ENCODE measurements at regions of chr9 and their contacts with region 1.

Region 1: GRCh38 chr9:112793213-112793810 is 42.8 kb downstream of the SNX30 start:
- DNase-seq: no peak
- H3K4me3 ChIP-seq: no peak overlapping the region
- CTCF ChIP-seq: peak; percentile 78

Region 2: DNA sequence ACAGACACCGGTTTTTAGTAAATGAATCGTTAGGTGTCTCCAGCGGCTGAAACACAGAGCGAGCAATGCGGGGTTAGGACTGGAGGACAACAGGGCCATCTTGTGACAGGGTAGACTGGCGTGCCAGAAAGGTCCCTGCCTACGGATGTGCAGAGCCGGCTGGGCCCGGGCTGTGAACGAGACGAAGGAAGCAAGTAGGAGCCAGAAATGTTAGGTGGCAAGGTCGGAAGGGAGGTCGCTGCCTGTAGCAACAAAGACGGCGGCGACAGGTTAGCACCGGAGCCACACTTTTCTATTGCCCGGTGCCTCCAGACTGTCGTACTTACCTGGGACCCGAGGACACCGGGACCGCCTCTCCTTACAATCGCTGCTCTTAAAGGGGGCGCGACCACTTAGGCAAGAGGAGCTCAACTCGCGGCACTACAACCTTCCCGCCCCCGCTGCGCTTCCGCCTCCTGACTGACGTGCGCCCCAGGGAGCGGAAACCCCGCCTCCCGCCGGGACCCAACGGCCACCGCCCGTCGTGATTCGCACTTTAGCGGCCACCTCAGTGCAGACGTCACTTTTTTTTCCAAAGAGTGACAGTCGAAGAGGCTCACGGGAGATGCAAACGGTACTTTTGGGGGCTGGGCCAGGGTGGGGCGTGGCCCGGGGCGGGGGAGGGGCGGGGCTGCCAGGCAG is 75.5 kb before region 1 on chr9 and contains the start of gene INIP:
- CTCF ChIA-PET with region 1: interaction called, 14 read pairs
- POLR2A ChIA-PET with region 1: no interaction called
- DNase-seq: peak; percentile 65
- H3K4me3 ChIP-seq: peak within 1 kb of the TSS; percentile 95
- CTCF ChIP-seq: no peak

Measured in AG04449 (cell line).